AG04450 (cell line): ENCODE measurements at regions of chr3 and their contacts with region 1.

Region 1: GRCh38 chr3:136752422-136753325 is 496 bp upstream of the STAG1 start:
- DNase-seq: peak; percentile 96
- H3K4me3 ChIP-seq: peak overlapping the region; percentile 71
- H3K27ac ChIP-seq: peak overlapping the region; percentile 99
- H3K27me3 ChIP-seq: no peaks in the 10 kb centered on the region
- CTCF ChIP-seq: peak; percentile 42

Region 2: DNA sequence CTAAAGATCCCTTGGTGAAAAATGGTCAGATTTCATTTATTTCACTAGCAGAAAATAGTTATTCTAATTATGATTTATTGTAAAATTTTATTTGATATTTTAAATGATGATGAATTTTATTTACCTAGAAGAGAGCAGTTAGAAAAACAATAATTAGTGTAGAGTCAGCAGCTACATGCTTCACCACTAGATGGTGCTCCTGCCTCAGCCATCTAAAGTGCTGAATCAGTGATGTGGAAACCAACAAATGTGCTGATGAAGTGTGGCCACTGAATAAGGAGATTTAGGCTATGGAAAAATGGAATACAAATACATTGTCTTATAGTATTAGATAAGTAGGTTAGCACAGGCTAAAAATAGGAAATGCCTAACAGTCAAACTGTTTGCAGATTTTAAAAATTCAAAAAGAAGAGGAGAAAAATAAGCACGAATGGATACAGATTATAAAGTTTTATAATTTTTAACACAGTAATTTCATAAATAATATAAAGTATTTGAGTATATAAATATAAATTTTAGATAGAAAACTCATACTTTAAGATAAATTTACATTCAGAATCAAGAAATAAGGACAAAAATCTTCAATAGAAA is 677.4 kb before region 1 on chr3:
- CTCF ChIA-PET with region 1: interaction called, 35 read pairs
- POLR2A ChIA-PET with region 1: interaction called, 5 read pairs
- DNase-seq: peak; percentile 62
- H3K4me3 ChIP-seq: no peak overlapping the region
- H3K27ac ChIP-seq: no peak overlapping the region
- H3K27me3 ChIP-seq: no peaks in the 10 kb centered on the region
- CTCF ChIP-seq: peak; percentile 91

Region 3: DNA sequence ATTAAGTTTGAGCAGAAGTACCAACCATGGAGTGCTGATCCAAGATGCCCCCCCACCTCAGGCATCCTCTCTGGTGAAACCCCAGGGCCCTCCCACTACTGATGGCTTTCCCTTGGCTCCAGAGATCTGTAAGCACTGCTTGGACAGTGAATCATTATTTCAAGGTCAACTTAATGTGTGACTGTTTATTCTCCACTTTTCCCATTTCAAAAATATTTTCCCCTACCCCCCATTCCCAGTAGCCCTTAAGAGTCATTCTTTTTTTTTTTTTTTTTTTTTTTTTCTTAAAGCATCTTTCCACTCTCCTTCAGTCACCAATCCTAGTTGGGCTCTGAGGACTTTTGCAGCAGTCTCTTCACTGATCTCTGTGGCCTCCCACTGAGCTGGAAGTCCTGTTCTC is 419.9 kb before region 1 on chr3:
- CTCF ChIA-PET with region 1: interaction called, 21 read pairs
- POLR2A ChIA-PET with region 1: interaction called, 5 read pairs
- DNase-seq: peak; percentile 54
- H3K4me3 ChIP-seq: no peak overlapping the region
- H3K27ac ChIP-seq: no peak overlapping the region
- H3K27me3 ChIP-seq: no peaks in the 10 kb centered on the region
- CTCF ChIP-seq: no peak

Region 4: DNA sequence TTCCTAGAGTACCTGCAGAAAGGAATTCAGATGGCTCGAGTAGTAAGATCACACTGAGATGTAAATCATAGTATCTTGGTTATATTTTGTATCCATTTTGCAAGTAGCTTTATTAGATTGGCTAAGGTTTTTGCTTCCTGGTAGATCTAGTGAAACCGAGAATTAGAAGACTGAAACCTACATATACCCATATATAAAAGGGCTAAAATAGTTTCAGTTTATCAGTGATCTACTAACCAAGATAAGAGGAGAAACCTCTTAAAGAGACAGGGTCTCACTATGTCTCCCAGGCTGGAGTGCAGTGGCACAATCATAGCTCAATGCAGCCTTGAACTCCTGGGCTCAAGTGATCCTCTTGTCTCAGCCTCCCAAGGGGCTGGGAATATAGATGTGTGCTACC is 367.2 kb before region 1 on chr3:
- CTCF ChIA-PET with region 1: interaction called, 88 read pairs
- POLR2A ChIA-PET with region 1: interaction called, 24 read pairs
- DNase-seq: no peak
- H3K4me3 ChIP-seq: no peak overlapping the region
- H3K27ac ChIP-seq: no peak overlapping the region
- H3K27me3 ChIP-seq: no peaks in the 10 kb centered on the region
- CTCF ChIP-seq: no peak

Region 5: DNA sequence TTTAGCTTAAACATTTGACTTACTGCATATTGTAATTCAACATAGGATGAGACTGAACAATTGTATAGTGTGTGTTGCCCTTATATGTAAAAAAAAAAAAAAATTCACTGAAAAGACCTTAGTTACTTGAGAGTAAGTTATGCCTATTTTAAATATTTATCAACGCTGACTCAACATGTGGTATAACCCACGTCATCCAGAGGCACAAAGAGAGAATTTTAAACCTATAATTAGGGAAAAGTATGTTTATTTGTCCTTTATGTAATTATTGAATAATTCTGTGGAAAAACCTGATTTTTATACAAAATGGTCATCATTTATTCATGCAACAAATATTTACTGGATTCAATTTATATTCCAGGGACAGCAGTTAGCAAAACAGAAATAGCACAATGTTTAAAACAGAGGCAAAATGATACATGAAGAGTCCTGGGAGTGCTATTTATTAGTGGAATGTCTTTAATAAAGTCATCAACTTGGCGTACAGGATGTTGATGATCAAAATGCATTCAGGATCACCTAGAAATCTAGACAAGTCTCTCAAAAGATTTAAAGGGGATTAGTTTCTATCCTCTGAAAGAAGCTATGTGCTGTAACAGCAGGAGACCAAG is 278.9 kb before region 1 on chr3:
- CTCF ChIA-PET with region 1: interaction called, 27 read pairs
- POLR2A ChIA-PET with region 1: interaction called, 4 read pairs
- DNase-seq: peak; percentile 76
- H3K4me3 ChIP-seq: no peak overlapping the region; the same call in 1 of the 2 replicates
- H3K27ac ChIP-seq: peak overlapping the region; percentile 77
- H3K27me3 ChIP-seq: no peaks in the 10 kb centered on the region
- CTCF ChIP-seq: no peak

Region 6: DNA sequence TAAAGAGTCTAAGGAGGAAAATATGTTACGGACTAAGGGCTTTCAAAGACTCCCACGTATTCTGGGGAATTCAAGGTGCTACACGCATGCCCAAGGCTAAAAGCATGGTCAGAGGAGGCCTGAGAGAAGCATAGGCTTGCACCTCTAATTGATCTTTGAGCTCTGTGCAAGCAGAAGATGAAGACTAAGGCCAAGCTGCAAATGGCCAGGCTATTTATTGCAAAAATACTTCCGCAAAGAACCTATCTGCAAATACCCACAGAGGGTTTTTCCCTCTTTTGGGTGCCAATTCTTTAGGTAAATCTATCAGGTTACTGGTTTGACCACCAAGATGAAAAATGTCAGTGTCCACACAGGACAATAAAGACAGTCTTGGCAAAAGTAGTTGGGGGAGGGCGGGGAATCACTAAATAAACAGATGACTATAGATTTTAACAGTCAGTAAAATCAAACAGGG is 120.0 kb before region 1 on chr3:
- CTCF ChIA-PET with region 1: interaction called, 12 read pairs
- POLR2A ChIA-PET with region 1: interaction called, 4 read pairs
- DNase-seq: no peak
- H3K4me3 ChIP-seq: no peak overlapping the region
- H3K27ac ChIP-seq: no peak overlapping the region
- H3K27me3 ChIP-seq: no peaks in the 10 kb centered on the region
- CTCF ChIP-seq: no peak

Region 7: GRCh38 chr3:136861890-136862616 is 109.4 kb after region 1 on chr3 and contains the start of gene NCK1:
- CTCF ChIA-PET with region 1: interaction called, 32 read pairs
- POLR2A ChIA-PET with region 1: interaction called, 32 read pairs
- DNase-seq: peak; percentile 94
- H3K4me3 ChIP-seq: peak within 1 kb of the TSS; percentile 91
- H3K27ac ChIP-seq: peak within 1 kb of the TSS; percentile 87
- H3K27me3 ChIP-seq: no peaks in the 10 kb centered on the region
- CTCF ChIP-seq: no peak
- polyA plus RNA-seq, gene NCK1: 44.0 and 67.7 TPM in 2 replicates

Region 8: GRCh38 chr3:137231126-137231525 is 478.5 kb after region 1 on chr3:
- CTCF ChIA-PET with region 1: no interaction called
- POLR2A ChIA-PET with region 1: no interaction called
- DNase-seq: no peak
- H3K4me3 ChIP-seq: no peak overlapping the region
- H3K27ac ChIP-seq: no peak overlapping the region
- H3K27me3 ChIP-seq: no peaks in the 10 kb centered on the region
- CTCF ChIP-seq: no peak